Heart right ventricle (tissue), 16 donors: ENCODE measurements at regions of chrX and their contacts with region 1.

Region 1: GRCh38 chrX:123960042-123960611 is 1.4 kb upstream of the STAG2 start:
- DNase-seq: peak; percentile 86 to 89
- ATAC-seq: peak; percentile 84 to 94 (median 88)
- H3K4me3 ChIP-seq: peak overlapping the region; percentile 35 to 86 (median 80)
- H3K27ac ChIP-seq: peak overlapping the region; percentile 95 to 100 (median 99)
- H3K4me1 ChIP-seq: peaks cover 0 to 27% (median 9%) of the 10 kb centered on the region in 9 donors
- H3K27me3 ChIP-seq: no peaks in the 10 kb centered on the region
- CTCF ChIP-seq: peak; percentile 73 to 91 (median 86)

Region 2: DNA sequence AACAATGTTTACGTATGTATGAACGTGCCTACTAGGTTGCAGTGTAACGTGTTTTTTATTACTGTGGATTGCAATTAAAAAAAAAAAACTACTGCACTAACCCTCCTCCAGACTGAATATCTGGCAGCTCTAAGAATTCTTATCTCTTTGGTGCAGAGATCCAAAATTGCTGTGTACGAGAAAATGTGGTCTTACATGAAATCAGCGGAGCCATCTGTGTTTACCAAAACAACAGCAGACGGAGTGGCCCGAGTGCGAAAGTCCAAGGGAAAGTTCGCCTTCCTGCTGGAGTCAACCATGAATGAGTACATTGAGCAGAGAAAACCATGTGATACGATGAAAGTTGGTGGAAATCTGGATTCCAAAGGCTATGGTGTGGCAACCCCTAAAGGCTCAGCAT is 495.4 kb before region 1 on chrX:
- intact Hi-C with region 1: no loop called
- DNase-seq: no peak
- ATAC-seq: no peak
- H3K4me3 ChIP-seq: no peak overlapping the region
- H3K27ac ChIP-seq: no peak overlapping the region
- H3K4me1 ChIP-seq: no peaks in the 10 kb centered on the region
- H3K27me3 ChIP-seq: no peaks in the 10 kb centered on the region
- CTCF ChIP-seq: no peak

Region 3: GRCh38 chrX:123788744-123789143 is 171.4 kb before region 1 on chrX:
- intact Hi-C with region 1: no loop called
- DNase-seq: no peak
- ATAC-seq: no peak
- H3K4me3 ChIP-seq: no peak overlapping the region
- H3K27ac ChIP-seq: no peak overlapping the region
- H3K4me1 ChIP-seq: peaks cover 0 to 3% (median 0%) of the 10 kb centered on the region in 9 donors
- H3K27me3 ChIP-seq: no peaks in the 10 kb centered on the region
- CTCF ChIP-seq: no peak

Region 4: DNA sequence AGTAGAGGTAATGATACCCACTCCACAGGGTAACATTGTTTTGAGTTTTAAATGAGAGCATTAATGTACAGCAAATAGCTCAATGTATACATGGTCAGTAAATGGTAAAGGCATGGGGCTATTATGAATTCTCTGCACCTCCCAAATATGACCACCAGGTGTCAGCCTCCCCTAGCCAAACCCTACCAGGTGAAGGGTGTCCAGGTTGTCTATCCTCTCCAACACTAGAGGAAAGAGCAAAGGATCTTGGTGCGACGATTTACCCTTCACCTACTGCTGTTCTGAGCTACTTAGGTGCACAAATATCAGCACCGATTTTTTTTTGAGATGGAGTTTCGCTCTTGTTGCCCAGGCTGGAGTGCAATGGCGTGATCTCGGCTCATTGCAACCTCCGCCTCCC is 126.7 kb before region 1 on chrX:
- intact Hi-C with region 1: loop called in 1 of 10 experiments (anchors 10 kb)
- DNase-seq: peak in 1 of 2 donors; percentile 20
- ATAC-seq: peak; percentile 44 to 85 (median 78)
- H3K4me3 ChIP-seq: no peak overlapping the region
- H3K27ac ChIP-seq: no peak overlapping the region
- H3K4me1 ChIP-seq: no peaks in the 10 kb centered on the region
- H3K27me3 ChIP-seq: peaks cover 0 to 6% (median 0%) of the 10 kb centered on the region in 7 donors
- CTCF ChIP-seq: peak; percentile 46 to 84 (median 72)

Region 5: GRCh38 chrX:123859846-123860838 is 100.0 kb before region 1 on chrX and contains the start of gene XIAP:
- intact Hi-C with region 1: no loop called
- DNase-seq: peak; percentile 83 to 87
- ATAC-seq: peak; percentile 94 to 98 (median 98)
- H3K4me3 ChIP-seq: peak within 1 kb of the TSS; percentile 53 to 81 (median 70)
- H3K27ac ChIP-seq: peak within 1 kb of the TSS; percentile 88 to 99 (median 97)
- H3K4me1 ChIP-seq: peaks cover 0 to 25% (median 0%) of the 10 kb centered on the region in 9 donors
- H3K27me3 ChIP-seq: no peaks in the 10 kb centered on the region
- CTCF ChIP-seq: peak in 2 of 9 donors; percentile 5 to 14
- total RNA-seq, gene XIAP: 22.2 to 34.6 (median 29.5) TPM

Region 6: GRCh38 chrX:123884809-123885408 is 75.2 kb before region 1 on chrX:
- intact Hi-C with region 1: no loop called
- DNase-seq: peak in 1 of 2 donors; percentile 8
- ATAC-seq: no peak
- H3K4me3 ChIP-seq: no peak overlapping the region
- H3K27ac ChIP-seq: no peak overlapping the region
- H3K4me1 ChIP-seq: no peaks in the 10 kb centered on the region
- H3K27me3 ChIP-seq: no peaks in the 10 kb centered on the region
- CTCF ChIP-seq: peak in 8 of 9 donors; percentile 24 to 67 (median 55)

Region 7: GRCh38 chrX:124018023-124018422 is 57.9 kb after region 1 on chrX:
- intact Hi-C with region 1: loop called in 5 of 10 experiments (anchors 5 to 10 kb)
- DNase-seq: no peak
- ATAC-seq: no peak
- H3K4me3 ChIP-seq: no peak overlapping the region
- H3K27ac ChIP-seq: no peak overlapping the region
- H3K4me1 ChIP-seq: peaks cover 0 to 29% (median 6%) of the 10 kb centered on the region in 9 donors
- H3K27me3 ChIP-seq: no peaks in the 10 kb centered on the region
- CTCF ChIP-seq: peak in 5 of 9 donors; percentile 11 to 37 (median 32)

Region 8: DNA sequence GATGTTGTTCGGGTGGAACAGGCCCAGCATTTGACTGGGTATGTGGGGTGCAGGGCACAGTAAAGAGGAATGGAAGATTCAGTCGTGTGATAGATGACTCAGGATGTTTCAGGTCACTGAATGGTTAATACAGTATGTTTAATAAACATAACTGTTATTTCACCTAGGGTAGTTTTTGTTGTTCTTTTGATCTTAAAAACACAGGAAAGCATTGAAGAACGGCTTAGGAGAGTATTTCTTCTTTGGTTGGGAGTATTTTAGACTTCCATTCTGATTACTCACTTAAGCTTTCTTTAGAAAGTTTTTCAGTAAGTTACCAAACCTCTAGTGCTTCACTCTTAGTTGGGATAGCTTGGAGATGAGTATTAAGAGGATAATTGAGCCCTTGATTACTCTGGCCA is 63.7 kb after region 1 on chrX:
- intact Hi-C with region 1: loop called in 5 of 10 experiments (anchors 5 to 10 kb)
- DNase-seq: no peak
- ATAC-seq: no peak
- H3K4me3 ChIP-seq: no peak overlapping the region
- H3K27ac ChIP-seq: no peak overlapping the region
- H3K4me1 ChIP-seq: peaks cover 0 to 23% (median 0%) of the 10 kb centered on the region in 9 donors
- H3K27me3 ChIP-seq: no peaks in the 10 kb centered on the region
- CTCF ChIP-seq: no peak